Ascending aorta (tissue), 2 donors: ENCODE measurements at regions of chr3 and their contacts with region 1.

Region 1: GRCh38 chr3:160904691-160905090 is 148.7 kb downstream of the PPM1L start:
- DNase-seq: no peak
- H3K4me3 ChIP-seq: no peak overlapping the region
- H3K27ac ChIP-seq: no peak overlapping the region
- H3K4me1 ChIP-seq: no peaks in the 10 kb centered on the region
- H3K27me3 ChIP-seq: no peaks in the 10 kb centered on the region
- CTCF ChIP-seq: no peak

Region 2: DNA sequence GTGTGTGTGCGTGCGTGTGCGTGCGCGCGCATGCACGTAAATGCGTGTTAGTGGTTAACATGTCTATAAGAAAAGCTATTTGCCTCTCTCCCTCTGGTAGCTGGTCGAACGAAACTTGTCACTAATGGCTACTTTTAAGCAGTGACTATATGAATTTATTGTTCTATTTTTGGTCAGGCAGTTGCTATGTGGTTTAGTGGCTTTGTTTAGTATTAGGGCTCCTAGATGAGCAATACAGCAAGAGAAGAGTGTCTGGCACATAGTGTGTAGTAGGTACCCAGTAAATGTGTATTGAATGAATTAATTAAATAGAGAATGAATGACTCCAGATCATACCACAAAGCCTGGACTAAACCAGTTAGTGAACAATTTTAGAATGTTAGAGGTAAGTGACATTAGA is 22.9 kb after region 1 on chr3:
- intact Hi-C with region 1: loop called (anchors 2 kb)
- DNase-seq: no peak
- H3K4me3 ChIP-seq: no peak overlapping the region
- H3K27ac ChIP-seq: no peak overlapping the region
- H3K4me1 ChIP-seq: no peaks in the 10 kb centered on the region
- H3K27me3 ChIP-seq: no peaks in the 10 kb centered on the region
- CTCF ChIP-seq: no peak